AG04450 (cell line): ENCODE measurements at regions of chr1 and their contacts with region 1.

Region 1: GRCh38 chr1:88983791-88984559 is 8.5 kb downstream of the KYAT3 start:
- DNase-seq: no peak
- H3K4me3 ChIP-seq: peak overlapping the region; percentile 31; the same call in 1 of the 2 replicates
- H3K27ac ChIP-seq: peak overlapping the region; percentile 66
- H3K27me3 ChIP-seq: no peaks in the 10 kb centered on the region
- CTCF ChIP-seq: peak; percentile 65

Region 2: GRCh38 chr1:88791192-88791591 is 192.8 kb before region 1 on chr1:
- CTCF ChIA-PET with region 1: no interaction called
- POLR2A ChIA-PET with region 1: no interaction called
- DNase-seq: no peak
- H3K4me3 ChIP-seq: no peak overlapping the region
- H3K27ac ChIP-seq: no peak overlapping the region
- H3K27me3 ChIP-seq: no peaks in the 10 kb centered on the region
- CTCF ChIP-seq: no peak

Region 3: GRCh38 chr1:88961647-88962275 is 22.2 kb before region 1 on chr1:
- CTCF ChIA-PET with region 1: interaction called, 16 read pairs
- POLR2A ChIA-PET with region 1: no interaction called
- DNase-seq: no peak
- H3K4me3 ChIP-seq: no peak overlapping the region
- H3K27ac ChIP-seq: no peak overlapping the region
- H3K27me3 ChIP-seq: no peaks in the 10 kb centered on the region
- CTCF ChIP-seq: no peak

Region 4: DNA sequence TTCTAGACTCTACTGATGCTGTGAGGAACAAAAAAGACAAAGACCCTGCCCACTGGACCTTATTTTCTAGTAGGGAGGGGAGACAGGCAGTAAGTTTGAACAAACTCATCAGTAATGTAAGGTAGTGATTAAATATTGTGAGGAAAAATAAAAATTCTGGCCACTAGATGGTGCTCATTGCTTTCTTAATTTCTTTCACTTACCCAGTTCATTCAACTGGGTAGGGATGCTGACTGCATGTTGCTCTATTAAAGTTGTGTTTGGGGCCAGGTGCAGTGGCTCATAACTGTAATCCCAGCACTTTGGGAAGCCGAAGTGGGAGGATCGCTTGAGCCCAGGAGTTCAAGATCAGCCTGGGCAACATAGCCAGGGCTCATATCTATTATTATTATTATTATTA is 14.7 kb after region 1 on chr1:
- CTCF ChIA-PET with region 1: interaction called, 51 read pairs
- POLR2A ChIA-PET with region 1: interaction called, 5 read pairs
- DNase-seq: no peak
- H3K4me3 ChIP-seq: no peak overlapping the region
- H3K27ac ChIP-seq: no peak overlapping the region
- H3K27me3 ChIP-seq: no peaks in the 10 kb centered on the region
- CTCF ChIP-seq: peak; percentile 47

Region 5: GRCh38 chr1:89041119-89041641 is 57.2 kb after region 1 on chr1:
- CTCF ChIA-PET with region 1: interaction called, 14 read pairs
- POLR2A ChIA-PET with region 1: no interaction called
- DNase-seq: no peak
- H3K4me3 ChIP-seq: no peak overlapping the region
- H3K27ac ChIP-seq: no peak overlapping the region
- H3K27me3 ChIP-seq: no peaks in the 10 kb centered on the region
- CTCF ChIP-seq: no peak

Region 6: DNA sequence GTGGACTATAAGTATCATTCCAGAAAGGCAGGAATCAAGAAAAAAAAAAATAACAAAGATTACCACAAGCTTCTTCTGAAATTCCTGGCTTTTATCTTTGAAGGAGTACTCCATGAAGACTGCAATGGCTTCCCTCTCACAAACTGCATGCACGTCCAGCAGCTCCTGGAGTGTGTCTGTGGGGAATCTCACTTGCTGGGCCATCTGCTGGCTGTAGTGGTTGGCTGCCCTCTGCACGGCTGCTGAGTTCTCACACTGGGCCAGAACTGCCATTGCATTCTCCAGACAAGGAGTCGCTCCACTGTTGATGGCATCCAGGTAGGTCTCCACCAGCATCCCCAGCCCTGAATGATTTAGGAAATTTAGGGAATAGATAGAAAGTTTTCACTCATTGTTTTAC is 165.3 kb after region 1 on chr1:
- CTCF ChIA-PET with region 1: interaction called, 14 read pairs
- POLR2A ChIA-PET with region 1: no interaction called
- DNase-seq: peak; percentile 8
- H3K4me3 ChIP-seq: no peak overlapping the region
- H3K27ac ChIP-seq: no peak overlapping the region
- H3K27me3 ChIP-seq: peaks cover 3% of the 10 kb centered on the region
- CTCF ChIP-seq: peak; percentile 60

Region 7: DNA sequence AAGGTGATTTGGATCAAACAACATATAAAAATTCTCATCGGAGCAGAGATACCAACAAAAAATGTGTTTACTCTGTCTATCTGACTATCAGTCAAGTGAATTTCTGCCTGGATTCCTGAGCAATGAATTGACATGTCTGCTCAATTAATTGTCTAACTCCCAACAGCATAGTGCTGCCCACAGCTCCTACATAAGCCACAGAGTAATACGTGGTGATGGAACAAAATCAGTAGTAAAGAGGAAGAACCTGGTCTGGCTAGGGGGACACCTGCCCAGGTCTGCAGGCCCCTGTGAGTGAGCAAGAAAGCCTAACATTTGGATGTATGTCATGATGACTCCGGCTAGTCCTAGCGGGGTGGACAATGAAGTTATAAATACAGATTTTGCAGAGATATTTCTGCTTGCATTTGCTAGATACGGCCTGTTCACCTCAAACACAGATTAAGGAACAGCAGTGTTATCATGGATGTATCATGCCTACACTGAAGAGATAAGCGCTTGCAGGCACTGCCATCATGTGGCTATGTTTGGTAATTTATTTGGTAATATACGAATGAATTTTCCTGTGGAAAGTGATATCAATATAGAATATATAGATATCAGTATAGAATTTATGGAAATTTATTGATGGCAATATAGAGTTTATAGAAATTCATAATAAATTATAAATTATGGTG is 471.0 kb after region 1 on chr1:
- CTCF ChIA-PET with region 1: interaction called, 13 read pairs
- POLR2A ChIA-PET with region 1: no interaction called
- DNase-seq: no peak
- H3K4me3 ChIP-seq: no peak overlapping the region
- H3K27ac ChIP-seq: no peak overlapping the region
- H3K27me3 ChIP-seq: no peaks in the 10 kb centered on the region
- CTCF ChIP-seq: peak; percentile 71